ENCODE measurements at regions of chr7 and their contacts with region 1.

Region 1: DNA sequence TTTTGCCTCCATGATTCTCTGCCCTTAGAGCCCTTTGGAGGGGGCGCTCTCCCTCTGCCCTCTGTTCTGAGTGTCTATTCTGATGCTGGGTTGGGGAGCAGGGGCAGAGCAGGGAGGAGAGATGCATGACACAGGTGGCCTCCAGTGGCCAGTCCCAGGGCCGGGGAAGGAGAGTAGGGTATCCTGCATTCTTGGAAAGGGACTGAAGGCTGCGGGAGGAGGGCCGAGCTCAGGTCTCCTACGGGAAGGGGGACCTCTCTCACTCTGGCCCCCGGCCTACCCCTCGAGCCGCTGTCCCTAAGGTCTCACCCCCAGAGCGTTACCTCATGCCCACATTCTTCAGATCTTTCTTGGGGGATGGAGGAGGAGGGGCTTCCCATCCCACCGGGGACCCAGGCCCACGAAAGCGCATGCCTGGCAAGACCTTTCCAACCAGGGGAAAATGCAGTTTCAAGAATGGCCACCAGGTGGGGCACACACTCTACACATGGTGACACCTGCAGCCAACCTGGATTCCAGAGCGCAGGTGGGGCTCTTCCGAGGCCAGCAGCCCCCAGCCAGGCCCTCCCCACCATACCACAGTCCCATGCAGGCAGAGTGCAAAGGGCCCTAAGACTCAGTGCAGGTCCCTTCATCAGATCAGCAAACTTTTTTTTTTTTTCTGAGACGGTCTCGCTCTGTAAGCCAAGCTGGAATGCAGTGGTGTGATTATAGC is 86.4 kb downstream of the MYL10 start:
- ATAC-seq: peak; percentile 13 to 67 (median 54)
- H3K4me3 ChIP-seq: no peak overlapping the region
- H3K27ac ChIP-seq: no peak overlapping the region
- H3K4me1 ChIP-seq: peaks cover 0 to 6% of the 10 kb centered on the region in 2 donors

Region 2: DNA sequence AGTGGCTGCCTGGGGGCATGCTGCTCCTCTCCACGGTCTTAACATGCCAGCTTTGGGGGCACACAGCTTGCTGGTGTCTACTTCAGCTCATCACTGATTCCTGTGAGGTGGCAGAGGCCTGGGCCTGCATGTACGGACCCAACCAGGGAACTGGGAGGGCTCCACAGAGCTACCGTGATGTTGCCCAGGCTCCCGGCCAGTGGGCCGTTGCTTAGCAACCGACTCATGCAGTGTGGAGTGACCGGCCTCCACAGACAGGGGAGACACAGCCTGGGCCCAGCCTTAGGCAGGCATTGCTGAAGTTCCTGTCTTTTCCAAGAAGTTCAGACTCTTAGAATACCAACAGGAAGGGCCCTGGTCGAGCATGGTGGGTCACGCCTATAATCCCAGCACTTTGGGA is 718.2 kb after region 1 on chr7:
- in situ Hi-C with region 1: loop called in 5 of 9 experiments (anchors 10 to 25 kb)
- ATAC-seq: peak; percentile 35 to 100 (median 100)
- H3K4me3 ChIP-seq: no peak overlapping the region
- H3K27ac ChIP-seq: peak overlapping the region in 1 of 2 donors; percentile 22
- H3K4me1 ChIP-seq: peaks cover 2 to 9% of the 10 kb centered on the region in 2 donors

Region 3: DNA sequence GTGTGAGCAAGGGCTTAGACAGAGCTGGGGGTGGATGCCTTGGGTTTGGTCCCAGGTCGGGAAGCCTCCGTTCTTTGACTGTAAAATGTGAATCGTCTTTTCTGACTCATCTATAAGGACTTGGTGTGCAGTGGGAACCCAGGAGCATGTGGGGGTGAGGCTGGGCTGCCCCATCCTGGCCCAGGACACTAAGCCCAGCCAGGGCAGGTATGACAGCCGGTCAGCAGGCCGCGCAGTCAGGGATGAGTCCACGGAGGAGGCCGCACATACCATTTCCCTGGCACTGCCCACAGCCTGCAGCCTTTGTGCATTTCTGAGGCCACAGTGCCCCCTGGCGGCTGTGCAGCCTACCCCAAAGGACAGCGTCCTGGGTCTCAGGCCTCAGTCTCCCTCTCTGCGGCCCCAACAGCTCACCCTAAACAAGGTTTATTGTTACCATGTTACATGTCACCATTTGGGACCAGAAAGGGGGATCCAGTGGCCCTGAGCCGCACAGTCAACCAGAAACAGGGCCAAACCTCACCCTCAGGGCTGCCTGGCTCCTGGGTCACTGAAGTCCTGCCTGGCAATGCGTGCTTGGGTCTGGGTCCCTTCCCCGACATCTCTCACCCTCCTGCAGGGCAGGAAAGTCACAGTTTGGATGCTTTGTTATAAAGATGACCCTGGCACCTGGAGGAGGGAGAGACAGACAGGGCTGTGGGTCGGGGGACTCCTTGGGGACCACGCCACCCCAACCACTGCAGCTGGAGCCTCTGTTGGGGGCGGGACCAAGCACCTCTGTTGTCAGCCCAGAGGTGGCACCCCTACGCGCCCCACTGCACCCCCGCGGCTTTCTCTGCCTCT is 729.6 kb after region 1 on chr7:
- in situ Hi-C with region 1: loop called in 7 of 9 experiments (anchors 10 to 25 kb)
- ATAC-seq: peak; percentile 74 to 98 (median 82)
- H3K4me3 ChIP-seq: no peak overlapping the region
- H3K27ac ChIP-seq: no peak overlapping the region
- H3K4me1 ChIP-seq: peaks cover 3 to 6% of the 10 kb centered on the region in 2 donors

Measured in motor neuron (in vitro differentiated cells).